ENCODE measurements at regions of chr7 and their contacts with region 1.

Region 1: DNA sequence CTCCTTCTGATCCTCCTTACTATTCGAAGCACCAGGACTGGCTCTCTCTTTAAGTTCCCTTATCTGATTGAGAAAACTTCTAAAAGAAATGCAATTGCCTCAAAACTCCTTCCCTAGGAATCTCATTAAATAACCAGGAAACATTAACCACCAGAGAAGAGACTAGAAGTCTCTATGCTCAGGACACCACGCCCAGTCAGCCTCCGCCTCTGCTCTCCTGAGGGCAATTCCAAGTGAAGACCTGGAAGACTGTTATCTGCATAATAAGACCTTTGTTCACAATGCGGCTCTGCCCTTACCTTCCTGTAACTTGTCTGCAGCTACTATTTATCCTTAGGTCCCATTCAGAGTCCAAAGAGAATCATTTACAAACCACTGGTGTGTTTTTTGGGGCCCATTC is 78.8 kb downstream of the ELMO1 start:
- DNase-seq: no peak
- ATAC-seq: no peak
- H3K4me3 ChIP-seq: no peak overlapping the region
- H3K4me3 Mint-ChIP-seq: no peak overlapping the region
- H3K27ac ChIP-seq: no peak overlapping the region
- H3K27ac Mint-ChIP-seq: no peak overlapping the region
- H3K4me1 ChIP-seq: peaks cover 13% of the 10 kb centered on the region
- H3K4me1 Mint-ChIP-seq: peaks cover 56% of the 10 kb centered on the region
- H3K27me3 ChIP-seq: no peaks in the 10 kb centered on the region
- H3K27me3 Mint-ChIP-seq: no peaks in the 10 kb centered on the region
- CTCF ChIP-seq: no peak

Region 2: GRCh38 chr7:37247861-37248260 is 122.0 kb before region 1 on chr7:
- CTCF ChIA-PET with region 1: no interaction called
- POLR2A ChIA-PET with region 1: no interaction called
- intact Hi-C with region 1: no loop called
- DNase-seq: peak in 2 of 14 experiments; percentile 20 to 40
- ATAC-seq: no peak
- H3K4me3 ChIP-seq: no peak overlapping the region
- H3K4me3 Mint-ChIP-seq: no peak overlapping the region
- H3K27ac ChIP-seq: no peak overlapping the region
- H3K27ac Mint-ChIP-seq: no peak overlapping the region
- H3K4me1 ChIP-seq: peaks cover 4% of the 10 kb centered on the region
- H3K4me1 Mint-ChIP-seq: peaks cover 63% of the 10 kb centered on the region
- H3K27me3 ChIP-seq: no peaks in the 10 kb centered on the region
- H3K27me3 Mint-ChIP-seq: no peaks in the 10 kb centered on the region
- CTCF ChIP-seq: no peak

Region 3: GRCh38 chr7:37311355-37311754 is 58.6 kb before region 1 on chr7:
- CTCF ChIA-PET with region 1: no interaction called
- POLR2A ChIA-PET with region 1: no interaction called
- intact Hi-C with region 1: no loop called
- DNase-seq: peak in 10 of 14 experiments; percentile 6 to 73 (median 23)
- ATAC-seq: peak; percentile 55
- H3K4me3 ChIP-seq: no peak overlapping the region
- H3K4me3 Mint-ChIP-seq: peak overlapping the region; percentile 81
- H3K27ac ChIP-seq: peak overlapping the region in 1 of 2 donors; percentile 82
- H3K27ac Mint-ChIP-seq: peak overlapping the region; percentile 92
- H3K4me1 ChIP-seq: peaks cover 44% of the 10 kb centered on the region
- H3K4me1 Mint-ChIP-seq: peaks cover 89% of the 10 kb centered on the region
- H3K27me3 ChIP-seq: no peaks in the 10 kb centered on the region
- H3K27me3 Mint-ChIP-seq: no peaks in the 10 kb centered on the region
- CTCF ChIP-seq: no peak

Region 4: GRCh38 chr7:37399876-37400421 is 30.0 kb after region 1 on chr7:
- CTCF ChIA-PET with region 1: no interaction called
- POLR2A ChIA-PET with region 1: no interaction called
- intact Hi-C with region 1: loop called in 1 of 2 experiments (anchors 5 kb)
- DNase-seq: no peak
- ATAC-seq: no peak
- H3K4me3 ChIP-seq: no peak overlapping the region
- H3K4me3 Mint-ChIP-seq: no peak overlapping the region
- H3K27ac ChIP-seq: no peak overlapping the region
- H3K27ac Mint-ChIP-seq: no peak overlapping the region
- H3K4me1 ChIP-seq: peaks cover 10% of the 10 kb centered on the region
- H3K4me1 Mint-ChIP-seq: peaks cover 82% of the 10 kb centered on the region
- H3K27me3 ChIP-seq: no peaks in the 10 kb centered on the region
- H3K27me3 Mint-ChIP-seq: no peaks in the 10 kb centered on the region
- CTCF ChIP-seq: no peak